Cardiac septum (tissue), 1 donor: ENCODE measurements at regions of chr6 and their contacts with region 1.

Region 1: DNA sequence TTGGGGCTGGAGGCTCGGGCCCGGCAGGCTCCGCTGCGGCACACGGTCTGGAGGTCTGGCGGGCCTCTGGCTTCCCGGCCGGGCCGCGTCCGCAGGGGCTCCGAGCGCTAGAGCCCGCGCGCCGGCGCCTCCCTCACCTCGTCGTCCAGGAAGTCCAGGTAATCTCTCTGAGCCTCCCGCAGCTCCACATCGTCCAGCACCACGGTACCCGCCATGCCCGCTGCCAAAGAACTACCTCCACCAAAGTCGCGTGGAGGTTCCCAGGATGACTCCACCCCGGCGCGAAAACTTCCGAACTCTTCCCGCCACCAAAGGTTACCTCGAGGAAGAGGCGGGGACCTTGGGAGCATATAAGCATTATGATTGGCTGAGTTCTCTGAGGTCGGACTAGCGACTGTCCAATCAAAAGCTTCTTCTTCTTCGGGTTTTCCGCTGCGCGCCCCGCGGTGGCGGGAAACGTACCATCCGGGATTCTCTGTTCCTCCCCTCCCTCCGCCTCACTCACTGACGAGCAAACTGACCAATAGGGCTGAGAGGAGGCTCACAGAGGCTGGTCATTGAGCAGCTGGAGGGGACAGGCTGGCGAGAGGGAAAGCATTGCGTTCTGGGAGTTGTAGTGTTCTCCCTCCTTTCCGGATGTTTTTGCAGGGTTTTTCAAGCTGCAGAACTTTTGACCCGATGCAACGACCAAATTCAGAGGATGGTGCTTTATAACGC is at the start of gene MCM3:
- DNase-seq: peak; percentile 98
- total RNA-seq, gene MCM3: 21.0 TPM

Region 2: DNA sequence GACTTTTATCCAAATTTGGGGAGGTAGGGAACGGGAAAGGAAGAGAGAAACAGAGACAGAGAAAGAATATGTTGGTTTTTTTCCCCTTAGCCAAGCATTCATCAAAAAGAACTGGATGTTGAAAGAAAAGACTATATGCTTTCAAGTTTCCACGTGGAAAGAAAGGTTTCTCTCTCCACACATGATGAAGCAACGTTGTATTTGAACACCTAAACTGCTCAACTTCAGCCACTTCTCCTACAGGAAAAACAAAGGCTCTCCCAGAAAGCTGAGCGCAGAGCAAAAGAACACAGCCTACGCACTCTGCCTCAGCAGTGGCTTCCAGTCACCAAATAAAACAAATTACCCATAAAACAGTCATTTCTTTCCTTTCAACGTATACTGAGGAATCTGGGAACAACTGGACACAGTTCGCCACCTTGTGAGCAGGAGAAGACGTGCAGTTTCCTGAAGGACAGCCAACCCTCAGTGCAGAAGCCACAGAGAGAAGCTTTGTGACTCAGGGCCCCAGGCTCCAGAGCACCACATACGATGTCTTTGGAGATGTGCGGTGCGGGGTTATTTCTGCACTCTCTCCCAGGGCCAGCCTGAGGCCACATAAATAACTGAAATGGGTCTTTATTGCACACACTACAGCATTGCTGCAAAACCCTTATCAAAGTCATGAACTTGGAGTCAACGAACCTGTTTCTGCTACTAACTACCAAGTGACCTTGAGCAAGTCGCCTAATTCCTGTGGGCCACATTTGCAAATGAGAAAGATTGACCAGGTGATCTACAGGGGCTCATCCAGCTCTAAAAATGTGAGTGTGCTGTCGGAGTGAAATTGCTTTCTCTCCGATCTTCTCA is 50.4 kb before region 1 on chr6:
- intact Hi-C with region 1: no loop called
- DNase-seq: no peak

Region 3: GRCh38 chr6:52361945-52362442 is 77.4 kb after region 1 on chr6 and contains the start of gene PAQR8:
- intact Hi-C with region 1: loop called (anchors 2 kb)
- DNase-seq: peak; percentile 86
- total RNA-seq, gene PAQR8: 2.0 TPM

Region 4: GRCh38 chr6:52399511-52400312 is 115.1 kb after region 1 on chr6:
- intact Hi-C with region 1: loop called (anchors 1 kb)
- DNase-seq: no peak

Region 5: DNA sequence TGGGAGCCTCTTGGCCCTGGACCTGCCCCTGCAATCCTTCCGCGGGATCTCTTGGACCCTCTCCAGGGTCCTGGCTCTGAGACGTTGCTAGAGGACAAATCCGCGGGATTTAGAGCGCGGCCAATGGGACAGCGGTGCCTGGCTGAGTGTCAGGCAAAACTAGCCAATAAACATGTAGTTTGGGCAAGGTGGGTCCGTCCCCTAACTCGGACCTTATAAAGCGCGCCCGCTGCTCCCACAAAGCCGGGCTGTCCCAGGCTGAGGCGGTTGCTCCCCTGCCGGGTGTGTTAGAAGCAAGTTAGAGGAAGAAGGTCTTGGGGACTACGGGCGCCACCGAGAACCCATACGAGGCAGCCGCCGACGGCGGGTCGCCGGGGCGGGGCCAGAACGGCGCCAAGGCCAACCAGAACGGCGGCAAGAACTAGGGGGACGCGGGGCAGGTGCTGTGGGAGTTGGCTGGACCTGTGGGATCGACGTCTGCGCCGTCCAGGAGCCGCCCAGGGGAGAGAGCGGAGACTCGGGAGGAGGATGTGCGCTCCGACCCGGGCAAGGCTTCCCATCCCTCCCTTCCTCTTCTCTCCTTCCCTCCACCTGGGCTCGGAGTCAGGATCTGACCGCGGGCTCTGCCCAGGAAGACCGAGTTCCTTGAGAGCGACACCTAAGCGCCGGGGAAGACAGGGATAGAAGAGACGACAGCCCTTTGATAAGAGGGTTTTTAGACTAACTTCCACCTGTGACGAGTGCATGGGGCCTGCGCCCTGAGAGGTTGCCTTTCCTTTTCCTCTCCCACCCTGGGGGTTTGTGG is 379.8 kb after region 1 on chr6:
- intact Hi-C with region 1: loop called (anchors 2 kb)
- DNase-seq: peak; percentile 94